ENCODE measurements at regions of chr17 and their contacts with region 1.

Region 1: DNA sequence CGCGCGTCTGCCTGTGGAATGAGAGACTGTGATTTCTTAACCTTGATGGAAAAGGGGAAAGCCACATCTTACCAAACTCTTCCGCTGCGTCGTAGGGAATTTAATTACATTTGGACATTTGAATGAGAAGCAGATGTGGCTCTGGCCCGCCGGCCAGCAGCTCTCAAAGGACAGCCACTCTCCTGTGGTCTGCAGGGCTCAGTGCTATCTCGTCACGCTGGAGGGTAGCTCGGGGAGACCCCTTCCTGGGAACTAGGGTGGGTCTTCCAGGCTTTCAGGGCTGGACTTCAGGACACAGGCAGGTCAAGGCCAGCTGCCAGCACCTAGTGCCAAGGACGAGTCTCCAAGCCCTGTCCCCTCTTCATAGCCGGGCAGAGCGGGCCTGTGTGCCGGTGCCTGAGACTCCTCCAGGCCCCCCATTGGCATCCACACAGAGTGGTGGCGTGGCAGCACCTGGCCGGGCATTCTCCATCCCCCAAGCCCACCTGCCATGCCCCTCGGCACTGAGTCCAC is 15.9 kb upstream of the TBX2 start:
- DNase-seq: peak; percentile 81
- H3K4me3 ChIP-seq: no peak overlapping the region
- H3K27ac ChIP-seq: peak overlapping the region; percentile 34 to 97; a peak in 3 of 4 replicates
- H3K4me1 ChIP-seq: peaks cover 0 to 94% of the 10 kb centered on the region in 2 experiments; a peak in 3 of 4 replicates
- H3K27me3 ChIP-seq: no peaks in the 10 kb centered on the region
- CTCF ChIP-seq: no peak
- EP300 ChIP-seq: peak in 1 of 2 experiments; percentile 92; a peak in 3 of 4 replicates
- RAD21 ChIP-seq: peak; percentile 39

Region 2: GRCh38 chr17:60766778-60767190 is 617.0 kb before region 1 on chr17:
- CTCF ChIA-PET with region 1: no interaction called
- POLR2A ChIA-PET with region 1: no interaction called
- DNase-seq: no peak
- H3K4me3 ChIP-seq: no peak overlapping the region
- H3K27ac ChIP-seq: no peak overlapping the region
- H3K4me1 ChIP-seq: no peaks in the 10 kb centered on the region
- H3K27me3 ChIP-seq: no peaks in the 10 kb centered on the region
- CTCF ChIP-seq: no peak
- EP300 ChIP-seq: no peak
- RAD21 ChIP-seq: no peak

Region 3: DNA sequence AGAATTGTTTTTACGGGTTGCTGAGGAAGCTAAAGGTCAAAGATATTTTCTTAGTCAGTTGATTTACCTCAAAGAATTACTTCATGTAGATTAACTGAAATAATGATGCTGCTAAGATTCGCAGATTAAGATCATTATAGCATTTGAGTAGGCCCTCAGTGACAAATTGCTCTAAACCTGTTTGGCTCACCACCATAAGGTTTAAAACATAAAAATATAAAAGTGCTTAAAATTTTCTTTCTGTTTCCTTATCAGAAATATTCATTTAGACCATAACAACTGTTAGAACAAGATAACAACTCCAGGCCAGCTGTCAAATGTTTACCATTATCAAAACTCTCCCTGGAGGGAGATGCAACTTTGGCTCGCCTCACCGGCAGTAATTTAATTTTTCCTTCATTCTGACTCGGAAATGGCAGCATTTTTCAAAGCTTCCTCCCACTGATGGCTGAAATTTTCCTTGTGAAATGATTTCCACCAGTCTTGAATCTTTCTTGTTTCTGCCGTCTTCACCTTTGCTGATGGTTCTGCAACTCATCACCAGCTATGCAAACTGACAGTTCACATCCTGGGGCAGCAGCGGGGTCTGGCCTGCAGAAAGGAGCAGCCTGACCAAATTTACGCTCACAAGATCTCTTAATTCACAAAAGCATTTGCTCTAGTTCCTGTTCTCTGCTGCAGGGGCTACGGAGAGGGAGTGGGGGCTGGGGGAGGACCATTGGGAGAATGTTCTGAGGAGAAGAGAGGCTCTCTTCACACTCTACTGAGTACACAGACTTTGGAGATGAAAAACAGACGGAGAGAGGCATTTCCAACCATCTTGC is 238.8 kb before region 1 on chr17:
- CTCF ChIA-PET with region 1: interaction called, 13 read pairs
- POLR2A ChIA-PET with region 1: interaction called, 7 read pairs
- DNase-seq: peak; percentile 84
- H3K4me3 ChIP-seq: peak overlapping the region; percentile 4 to 45; a peak in 3 of 4 replicates
- H3K27ac ChIP-seq: peak overlapping the region; percentile 91 to 94
- H3K4me1 ChIP-seq: peaks cover 41 to 58% of the 10 kb centered on the region in 2 experiments
- H3K27me3 ChIP-seq: no peaks in the 10 kb centered on the region
- CTCF ChIP-seq: no peak
- EP300 ChIP-seq: peak; percentile 98 to 99
- RAD21 ChIP-seq: peak; percentile 62

Region 4: GRCh38 chr17:61532788-61533187 is 149.0 kb after region 1 on chr17:
- CTCF ChIA-PET with region 1: no interaction called
- POLR2A ChIA-PET with region 1: no interaction called
- DNase-seq: no peak
- H3K4me3 ChIP-seq: no peak overlapping the region
- H3K27ac ChIP-seq: no peak overlapping the region
- H3K4me1 ChIP-seq: no peaks in the 10 kb centered on the region; a peak in 1 of 4 replicates
- H3K27me3 ChIP-seq: no peaks in the 10 kb centered on the region
- CTCF ChIP-seq: no peak
- EP300 ChIP-seq: no peak
- RAD21 ChIP-seq: no peak

Measured in SK-N-SH (cell line).